ENCODE measurements at regions of chr12 and their contacts with region 1.

Region 1: GRCh38 chr12:49967042-49967776 is 5.5 kb downstream of the AQP5 start:
- DNase-seq: peak; percentile 94
- H3K4me3 ChIP-seq: peak overlapping the region in 3 of 4 donors; percentile 15 to 40 (median 33)
- H3K27ac ChIP-seq: no peak overlapping the region
- H3K4me1 ChIP-seq: peaks cover 0 to 11% (median 8%) of the 10 kb centered on the region in 4 donors
- H3K27me3 ChIP-seq: peaks cover 52% of the 10 kb centered on the region
- CTCF ChIP-seq: peak; percentile 83 to 94 (median 89)
- EP300 ChIP-seq: no peak
- POLR2A ChIP-seq: no peak

Region 2: DNA sequence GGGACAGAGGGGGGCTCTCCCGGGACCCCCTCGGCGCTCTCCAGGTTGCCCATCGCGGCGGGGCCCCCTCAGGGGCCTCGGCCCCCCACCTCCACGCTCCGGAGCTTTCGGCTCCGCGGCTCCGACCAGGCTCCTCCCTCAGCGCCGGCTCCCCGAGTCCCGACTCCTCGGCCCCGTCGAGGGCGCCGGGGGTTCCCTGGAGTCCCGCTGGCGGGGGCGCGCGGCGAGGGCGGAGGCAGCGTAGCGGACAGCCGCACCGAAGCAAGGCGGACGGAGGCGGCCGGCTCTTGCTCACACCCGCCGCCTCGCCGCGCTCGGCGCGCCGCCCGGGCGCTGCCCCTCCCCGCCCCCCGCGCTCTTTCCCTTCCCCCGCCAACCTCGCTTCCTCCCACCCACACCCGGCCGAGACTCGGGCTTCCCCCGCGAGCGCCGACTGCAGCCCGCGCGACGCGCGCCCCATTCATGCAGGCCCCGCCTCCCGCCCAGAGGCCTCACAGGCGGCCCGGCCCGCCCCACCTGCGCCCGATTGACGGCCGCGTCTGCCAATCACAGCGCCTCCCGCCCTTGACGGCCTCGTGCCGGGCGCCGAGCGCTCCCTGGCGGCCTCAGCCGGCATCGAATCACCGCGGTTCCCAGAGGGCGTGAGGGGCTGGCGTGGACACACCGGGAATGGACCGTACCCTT is 259.9 kb before region 1 on chr12 and contains the start of gene FMNL3:
- in situ Hi-C with region 1: no loop called
- intact Hi-C with region 1: no loop called
- DNase-seq: peak; percentile 98
- H3K4me3 ChIP-seq: peak within 1 kb of the TSS; percentile 78 to 83 (median 79)
- H3K27ac ChIP-seq: peak within 1 kb of the TSS; percentile 86 to 94 (median 92)
- H3K4me1 ChIP-seq: peaks cover 0 to 40% (median 15%) of the 10 kb centered on the region in 4 donors
- H3K27me3 ChIP-seq: peaks cover 35% of the 10 kb centered on the region
- CTCF ChIP-seq: peak; percentile 87 to 99 (median 95)
- EP300 ChIP-seq: no peak
- POLR2A ChIP-seq: no peak
- total RNA-seq, gene FMNL3: 5.3 to 16.5 (median 8.2) TPM

Region 3: GRCh38 chr12:50055831-50056638 is 88.8 kb after region 1 on chr12:
- in situ Hi-C with region 1: loop called (anchors 5 to 10 kb)
- intact Hi-C with region 1: loop called (anchors 2 kb)
- DNase-seq: peak; percentile 44
- H3K4me3 ChIP-seq: no peak overlapping the region
- H3K27ac ChIP-seq: no peak overlapping the region
- H3K4me1 ChIP-seq: peaks cover 0 to 26% (median 21%) of the 10 kb centered on the region in 4 donors
- H3K27me3 ChIP-seq: peaks cover 29% of the 10 kb centered on the region
- CTCF ChIP-seq: peak; percentile 85 to 98 (median 95)
- EP300 ChIP-seq: no peak
- POLR2A ChIP-seq: no peak

Region 4: DNA sequence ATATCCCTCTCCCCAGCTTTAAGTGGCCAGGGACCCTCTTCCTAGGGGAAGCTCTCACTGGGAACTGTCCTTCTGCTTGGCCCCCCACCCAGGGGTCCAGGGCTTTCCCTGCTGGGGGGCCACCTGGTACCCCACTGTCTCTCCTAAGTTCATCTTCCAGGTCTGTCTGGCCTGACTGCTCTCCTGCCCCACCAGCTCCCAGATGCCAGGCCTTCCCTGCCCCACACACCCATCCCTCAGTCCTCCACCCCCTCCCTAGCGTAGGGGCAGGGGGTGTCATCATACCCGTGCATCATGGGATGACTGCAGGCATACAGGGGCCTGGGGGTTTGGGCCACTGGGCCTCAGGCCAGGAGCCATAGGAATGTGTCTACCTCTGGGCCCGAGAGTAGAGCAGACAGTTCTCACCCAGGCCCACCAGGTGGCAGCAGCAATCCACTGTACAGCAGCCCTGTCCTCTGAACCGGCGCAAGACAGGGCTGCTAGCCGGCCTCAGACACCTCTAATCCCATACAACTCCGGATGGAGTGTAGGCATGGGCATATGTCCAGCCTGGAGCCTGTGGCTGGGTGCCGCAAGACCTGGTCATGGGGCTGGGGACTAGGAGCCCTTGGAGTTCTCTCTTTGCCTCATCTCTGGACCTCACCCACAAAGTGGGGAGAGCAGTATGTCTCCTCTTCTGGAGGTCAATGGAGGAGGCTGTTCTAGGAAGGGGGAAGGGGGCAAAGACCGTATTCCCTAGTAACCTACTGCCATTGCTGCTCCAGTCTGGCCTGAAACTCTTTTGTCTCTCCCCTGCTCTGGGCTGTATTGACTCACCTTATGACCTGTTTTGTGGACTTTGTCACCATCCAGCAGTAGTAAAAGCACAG is 108.0 kb after region 1 on chr12:
- in situ Hi-C with region 1: loop called in 1 of 4 experiments (anchors 5 kb)
- intact Hi-C with region 1: loop called (anchors 5 kb)
- DNase-seq: peak; percentile 89
- H3K4me3 ChIP-seq: no peak overlapping the region
- H3K27ac ChIP-seq: peak overlapping the region in 1 of 4 donors; percentile 29
- H3K4me1 ChIP-seq: peaks cover 3 to 16% (median 6%) of the 10 kb centered on the region in 4 donors
- H3K27me3 ChIP-seq: no peaks in the 10 kb centered on the region
- CTCF ChIP-seq: peak; percentile 89 to 94 (median 93)
- EP300 ChIP-seq: no peak
- POLR2A ChIP-seq: no peak

Region 5: GRCh38 chr12:50187084-50187900 is 220.1 kb after region 1 on chr12:
- in situ Hi-C with region 1: loop called in 1 of 4 experiments (anchors 25 kb)
- intact Hi-C with region 1: loop called (anchors 10 kb)
- DNase-seq: no peak
- H3K4me3 ChIP-seq: no peak overlapping the region
- H3K27ac ChIP-seq: peak overlapping the region; percentile 3 to 58 (median 32)
- H3K4me1 ChIP-seq: peaks cover 10 to 61% (median 46%) of the 10 kb centered on the region in 4 donors
- H3K27me3 ChIP-seq: no peaks in the 10 kb centered on the region
- CTCF ChIP-seq: no peak
- EP300 ChIP-seq: no peak
- POLR2A ChIP-seq: no peak

Measured in transverse colon (tissue), 4 donors.